ENCODE measurements at regions of chr10 and their contacts with region 1.

Region 1: GRCh38 chr10:101067356-101068083 is 5.7 kb downstream of the KAZALD1 start:
- DNase-seq: peak; percentile 68 to 78 (median 72)
- H3K4me3 ChIP-seq: peak overlapping the region; percentile 52 to 76
- H3K4me3 Mint-ChIP-seq: peak overlapping the region; percentile 90 to 97 (median 92)
- H3K27ac ChIP-seq: no peak overlapping the region
- H3K27ac Mint-ChIP-seq: peak overlapping the region in 3 of 7 donors; percentile 4 to 75 (median 24)
- H3K4me1 ChIP-seq: peaks cover 28% of the 10 kb centered on the region
- H3K4me1 Mint-ChIP-seq: peaks cover 4 to 32% (median 10%) of the 10 kb centered on the region in 4 donors
- H3K27me3 ChIP-seq: peaks cover 45% of the 10 kb centered on the region
- H3K27me3 Mint-ChIP-seq: peaks cover 23 to 44% of the 10 kb centered on the region in 2 donors

Region 2: GRCh38 chr10:101042667-101043355 is 24.7 kb before region 1 on chr10:
- CTCF ChIA-PET with region 1: interaction called, 645 read pairs
- POLR2A ChIA-PET with region 1: interaction called, 33 read pairs
- intact Hi-C with region 1: loop called (anchors 1 kb)
- DNase-seq: peak; percentile 64 to 84 (median 68)
- H3K4me3 ChIP-seq: peak overlapping the region; percentile 81 to 94
- H3K4me3 Mint-ChIP-seq: peak overlapping the region; percentile 92 to 99 (median 97)
- H3K27ac ChIP-seq: peak overlapping the region; percentile 68
- H3K27ac Mint-ChIP-seq: peak overlapping the region; percentile 87 to 99 (median 97)
- H3K4me1 ChIP-seq: peaks cover 27% of the 10 kb centered on the region
- H3K4me1 Mint-ChIP-seq: peaks cover 16 to 25% (median 19%) of the 10 kb centered on the region in 4 donors
- H3K27me3 ChIP-seq: peaks cover under 1% of the 10 kb centered on the region
- H3K27me3 Mint-ChIP-seq: peaks cover 11 to 12% of the 10 kb centered on the region in 2 donors

Region 3: GRCh38 chr10:101050208-101051069 is 17.1 kb before region 1 on chr10:
- CTCF ChIA-PET with region 1: interaction called, 645 read pairs
- POLR2A ChIA-PET with region 1: interaction called, 16 read pairs
- intact Hi-C with region 1: no loop called
- DNase-seq: peak; percentile 72 to 81 (median 73)
- H3K4me3 ChIP-seq: no peak overlapping the region
- H3K4me3 Mint-ChIP-seq: peak overlapping the region in 6 of 8 donors; percentile 13 to 65 (median 41)
- H3K27ac ChIP-seq: no peak overlapping the region
- H3K27ac Mint-ChIP-seq: peak overlapping the region in 1 of 7 donors; percentile 75
- H3K4me1 ChIP-seq: peaks cover 10% of the 10 kb centered on the region
- H3K4me1 Mint-ChIP-seq: peaks cover 3 to 25% (median 8%) of the 10 kb centered on the region in 4 donors
- H3K27me3 ChIP-seq: peaks cover 33% of the 10 kb centered on the region
- H3K27me3 Mint-ChIP-seq: peaks cover 35 to 38% of the 10 kb centered on the region in 2 donors

Region 4: GRCh38 chr10:101120884-101121653 is 53.5 kb after region 1 on chr10:
- CTCF ChIA-PET with region 1: no interaction called
- POLR2A ChIA-PET with region 1: no interaction called
- intact Hi-C with region 1: loop called (anchors 5 kb)
- DNase-seq: peak in 4 of 5 donors; percentile 46 to 54 (median 48)
- H3K4me3 ChIP-seq: peak overlapping the region; percentile 62 to 84
- H3K4me3 Mint-ChIP-seq: peak overlapping the region; percentile 94 to 99 (median 98)
- H3K27ac ChIP-seq: no peak overlapping the region
- H3K27ac Mint-ChIP-seq: peak overlapping the region; percentile 62 to 94 (median 87)
- H3K4me1 ChIP-seq: peaks cover 30% of the 10 kb centered on the region
- H3K4me1 Mint-ChIP-seq: peaks cover 13 to 32% (median 25%) of the 10 kb centered on the region in 4 donors
- H3K27me3 ChIP-seq: peaks cover 36% of the 10 kb centered on the region
- H3K27me3 Mint-ChIP-seq: peaks cover 22 to 42% of the 10 kb centered on the region in 2 donors

Measured in CD4-positive, alpha-beta memory T cell (primary cell).